ENCODE measurements at regions of chr3 and their contacts with region 1.

Region 1: DNA sequence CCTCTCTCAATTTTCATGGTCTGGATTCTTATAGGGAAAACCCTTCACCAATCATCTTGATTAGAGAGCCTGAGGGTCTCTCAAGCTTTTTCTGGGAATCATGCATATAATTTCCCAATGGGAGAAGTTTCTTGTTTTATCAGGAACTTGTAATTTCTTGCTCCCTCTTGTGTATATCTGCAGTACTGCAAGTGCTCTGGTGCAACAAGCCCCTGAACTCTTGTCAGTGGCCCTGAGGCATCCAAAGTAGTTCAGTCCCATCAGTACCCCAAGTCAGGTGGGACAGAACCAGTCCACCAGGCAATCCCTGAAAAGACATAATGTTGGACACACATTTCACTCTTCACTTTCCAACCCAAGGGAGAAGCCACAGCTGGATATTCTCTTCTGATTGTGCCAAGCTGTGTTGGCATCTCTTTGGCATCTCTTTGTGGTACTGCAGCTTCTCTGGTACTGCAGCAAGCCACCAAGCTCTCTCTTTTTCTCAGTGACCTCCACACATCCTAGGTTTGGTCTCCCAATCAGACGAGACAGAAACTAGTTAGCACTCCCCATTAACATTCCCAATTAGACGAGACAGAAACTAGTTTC is 214.5 kb downstream of the ZIC4 start:
- DNase-seq: no peak
- ATAC-seq: no peak

Region 2: DNA sequence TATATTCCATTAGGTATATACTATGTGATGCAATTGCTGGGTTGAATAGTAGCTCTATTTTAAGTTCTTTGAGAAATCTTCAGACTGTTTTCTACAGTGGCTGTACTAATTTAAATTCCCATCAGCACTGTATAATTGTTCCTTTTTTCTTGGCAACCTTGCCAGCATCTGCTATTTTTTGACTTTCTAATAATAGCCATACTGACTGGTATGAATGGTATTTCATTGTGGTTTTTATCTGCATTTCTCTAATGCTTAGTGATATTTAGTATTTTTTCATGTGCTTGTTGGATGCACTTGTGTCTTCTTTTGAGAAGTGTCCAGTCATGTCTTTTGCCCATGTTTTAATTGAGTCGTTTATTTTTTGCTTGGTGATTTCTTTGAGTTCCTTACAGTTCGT is 441.7 kb before region 1 on chr3:
- intact Hi-C with region 1: loop called (anchors 5 kb)
- DNase-seq: no peak
- ATAC-seq: peak; percentile 52

Region 3: DNA sequence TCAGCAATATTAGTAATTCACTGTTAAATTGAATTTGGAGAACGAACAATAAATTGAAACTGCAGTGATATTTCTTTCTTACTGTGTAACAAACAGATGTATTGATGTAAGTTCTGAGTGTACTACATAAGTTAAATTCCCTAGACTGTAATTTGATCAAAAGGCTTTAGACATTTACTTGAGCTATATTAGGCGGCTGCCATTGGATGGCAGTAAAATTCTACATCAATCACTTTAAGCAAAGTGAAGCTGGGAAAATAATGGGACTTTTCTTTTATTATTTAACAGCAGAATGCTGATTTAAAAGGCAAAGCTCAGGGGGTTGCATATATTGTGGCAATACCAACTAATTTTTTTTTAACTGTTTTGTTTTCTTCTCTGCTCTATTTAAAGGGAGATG is 374.2 kb before region 1 on chr3:
- intact Hi-C with region 1: loop called (anchors 2 kb)
- DNase-seq: no peak
- ATAC-seq: no peak